ENCODE measurements at regions of chr11 and their contacts with region 1.

Region 1: GRCh38 chr11:118304568-118305248 is at the start of gene CD3E:
- DNase-seq: peak; percentile 85
- ATAC-seq: peak; percentile 73
- H3K4me3 Mint-ChIP-seq: peak within 1 kb of the TSS; percentile 99
- H3K27ac Mint-ChIP-seq: peak within 1 kb of the TSS; percentile 99
- H3K4me1 Mint-ChIP-seq: peaks cover 73% of the 10 kb centered on the region
- H3K27me3 Mint-ChIP-seq: no peaks in the 10 kb centered on the region
- total RNA-seq, gene CD3E: 400 to 530 TPM

Region 2: GRCh38 chr11:118216621-118217481 is 87.9 kb before region 1 on chr11:
- CTCF ChIA-PET with region 1: interaction called, 3 read pairs
- POLR2A ChIA-PET with region 1: interaction called, 6 read pairs
- intact Hi-C with region 1: loop called (anchors 2 kb)
- DNase-seq: peak; percentile 76
- ATAC-seq: peak; percentile 73
- H3K4me3 Mint-ChIP-seq: peak overlapping the region; percentile 76
- H3K27ac Mint-ChIP-seq: peak overlapping the region; percentile 100
- H3K4me1 Mint-ChIP-seq: peaks cover 97% of the 10 kb centered on the region
- H3K27me3 Mint-ChIP-seq: no peaks in the 10 kb centered on the region

Region 3: DNA sequence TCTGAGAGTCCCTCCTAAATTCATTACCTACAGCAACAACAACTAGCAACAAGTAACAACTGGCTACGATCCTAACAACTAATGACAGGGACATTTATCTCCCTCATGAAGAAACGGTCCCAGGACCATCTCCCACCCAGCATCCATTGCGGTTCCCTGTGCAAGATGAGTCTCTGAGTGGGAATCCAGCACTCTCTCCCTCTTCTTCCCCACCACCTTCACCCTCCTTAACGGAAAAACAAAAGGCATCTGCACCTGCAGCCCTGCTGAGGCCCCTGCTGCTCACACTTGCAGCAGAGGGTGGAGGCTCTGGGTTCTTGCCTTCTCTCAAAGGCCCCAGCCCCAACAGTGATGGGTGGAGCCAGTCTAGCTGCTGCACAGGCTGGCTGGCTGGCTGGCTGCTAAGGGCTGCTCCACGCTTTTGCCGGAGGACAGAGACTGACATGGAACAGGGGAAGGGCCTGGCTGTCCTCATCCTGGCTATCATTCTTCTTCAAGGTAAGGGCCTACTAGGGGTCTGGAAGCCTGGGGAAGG is 39.3 kb after region 1 on chr11 and contains the start of gene CD3G:
- CTCF ChIA-PET with region 1: interaction called, 15 read pairs
- POLR2A ChIA-PET with region 1: interaction called, 23 read pairs
- intact Hi-C with region 1: loop called (anchors 1 kb)
- DNase-seq: peak; percentile 85
- ATAC-seq: peak; percentile 68
- H3K4me3 Mint-ChIP-seq: peak within 1 kb of the TSS; percentile 83
- H3K27ac Mint-ChIP-seq: peak within 1 kb of the TSS; percentile 100
- H3K4me1 Mint-ChIP-seq: peaks cover 54% of the 10 kb centered on the region
- H3K27me3 Mint-ChIP-seq: no peaks in the 10 kb centered on the region
- total RNA-seq, gene CD3G: 141 to 146 TPM

Region 4: GRCh38 chr11:118401151-118401878 is 96.6 kb after region 1 on chr11 and contains the start of gene ATP5MG:
- CTCF ChIA-PET with region 1: no interaction called
- POLR2A ChIA-PET with region 1: no interaction called
- intact Hi-C with region 1: loop called (anchors 1 to 5 kb)
- DNase-seq: peak; percentile 96
- ATAC-seq: peak; percentile 63
- H3K4me3 Mint-ChIP-seq: peak within 1 kb of the TSS; percentile 93
- H3K27ac Mint-ChIP-seq: peak within 1 kb of the TSS; percentile 100
- H3K4me1 Mint-ChIP-seq: peaks cover 64% of the 10 kb centered on the region
- H3K27me3 Mint-ChIP-seq: no peaks in the 10 kb centered on the region
- total RNA-seq, gene ATP5MG: 136 to 229 TPM

Region 5: GRCh38 chr11:118488480-118489109 is 183.9 kb after region 1 on chr11:
- CTCF ChIA-PET with region 1: no interaction called
- POLR2A ChIA-PET with region 1: no interaction called
- intact Hi-C with region 1: loop called in 1 of 2 experiments (anchors 5 kb)
- DNase-seq: peak; percentile 90
- ATAC-seq: peak; percentile 71
- H3K4me3 Mint-ChIP-seq: no peak overlapping the region
- H3K27ac Mint-ChIP-seq: peak overlapping the region; percentile 10
- H3K4me1 Mint-ChIP-seq: peaks cover 5% of the 10 kb centered on the region
- H3K27me3 Mint-ChIP-seq: no peaks in the 10 kb centered on the region

Region 6: DNA sequence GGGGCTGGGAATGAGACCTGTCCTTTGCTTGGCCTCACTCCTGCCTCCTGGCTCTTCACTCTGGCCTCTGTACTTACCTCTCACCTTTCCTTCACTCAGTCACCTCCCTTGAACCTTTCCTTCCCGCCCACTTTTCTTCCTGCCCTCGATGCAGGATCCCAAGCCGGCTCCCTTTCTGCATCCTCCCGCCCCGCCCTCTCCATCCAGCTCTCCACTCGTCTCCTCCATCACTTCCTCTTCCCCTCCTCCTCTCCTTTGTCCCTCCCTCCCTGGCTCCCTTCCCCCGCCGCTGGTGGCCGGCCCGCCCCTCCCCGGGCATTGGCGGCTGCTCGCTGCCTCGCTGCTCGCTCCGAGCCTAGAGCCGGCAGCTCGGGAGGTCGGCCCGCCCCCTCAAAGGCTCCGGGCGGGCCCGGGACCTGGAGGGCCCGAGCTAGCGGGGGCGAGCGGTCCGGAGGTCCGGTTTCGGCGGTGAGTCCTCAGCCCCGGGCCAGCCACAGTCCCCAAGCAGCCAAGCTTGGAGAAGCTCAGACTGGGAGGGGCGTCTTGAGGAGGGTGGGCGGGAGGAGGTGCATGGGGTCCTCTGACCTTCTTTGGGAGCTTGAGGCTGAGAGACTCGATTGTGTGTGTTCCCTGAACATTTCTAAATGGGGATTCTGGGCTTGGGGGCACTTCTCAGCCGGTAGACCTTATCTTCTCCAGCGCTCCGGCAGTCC is 316.5 kb after region 1 on chr11:
- CTCF ChIA-PET with region 1: no interaction called
- POLR2A ChIA-PET with region 1: no interaction called
- intact Hi-C with region 1: no loop called
- DNase-seq: peak; percentile 56
- ATAC-seq: peak; percentile 62
- H3K4me3 Mint-ChIP-seq: peak overlapping the region; percentile 39
- H3K27ac Mint-ChIP-seq: no peak overlapping the region
- H3K4me1 Mint-ChIP-seq: peaks cover 12% of the 10 kb centered on the region
- H3K27me3 Mint-ChIP-seq: peaks cover 8% of the 10 kb centered on the region

Region 7: DNA sequence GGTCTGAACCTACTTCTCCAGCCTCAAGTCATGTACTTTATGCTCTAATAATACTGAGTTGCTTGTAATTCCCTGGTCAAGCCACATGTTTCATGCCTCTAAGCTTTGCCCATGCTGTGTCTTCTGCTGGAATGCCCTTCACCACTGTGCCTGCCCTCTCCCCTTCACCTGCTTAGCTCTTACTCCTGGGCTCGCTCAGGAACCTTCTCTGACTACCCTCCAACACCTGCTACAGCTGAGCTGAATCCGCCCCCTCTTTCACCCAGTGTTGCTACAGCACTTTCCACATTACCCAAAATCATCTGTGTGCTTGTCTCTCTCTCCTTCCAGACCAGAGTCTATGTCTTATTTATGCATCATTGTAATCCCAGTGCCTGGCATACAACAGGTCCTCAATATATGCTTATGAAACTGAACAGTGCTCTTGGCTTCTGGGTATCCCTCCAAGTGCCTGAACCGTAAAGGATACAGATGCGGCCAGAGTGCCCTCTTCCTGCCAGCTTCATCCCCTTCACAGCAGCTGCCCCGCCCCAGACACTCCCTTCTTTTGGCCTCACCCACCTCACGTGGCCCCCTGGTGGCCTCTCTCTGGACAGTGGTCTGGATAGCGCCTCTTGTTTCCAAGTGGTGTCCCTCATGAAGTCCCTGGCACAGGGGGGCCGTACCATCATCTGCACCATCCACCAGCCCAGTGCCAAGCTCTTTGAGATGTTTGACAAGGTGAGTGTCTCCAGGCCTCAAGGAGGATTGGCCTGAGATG is 851.2 kb after region 1 on chr11:
- CTCF ChIA-PET with region 1: no interaction called
- POLR2A ChIA-PET with region 1: no interaction called
- intact Hi-C with region 1: no loop called
- DNase-seq: peak; percentile 32
- ATAC-seq: no peak
- H3K4me3 Mint-ChIP-seq: no peak overlapping the region
- H3K27ac Mint-ChIP-seq: no peak overlapping the region
- H3K4me1 Mint-ChIP-seq: no peaks in the 10 kb centered on the region
- H3K27me3 Mint-ChIP-seq: peaks cover 2% of the 10 kb centered on the region

Measured in activated CD4-positive, alpha-beta T cell treated with anti-CD3 and anti-CD28 coated beads for 36 hours (primary cell).